PC-9 (cell line): ENCODE measurements at regions of chr16 and their contacts with region 1.

Region 1: DNA sequence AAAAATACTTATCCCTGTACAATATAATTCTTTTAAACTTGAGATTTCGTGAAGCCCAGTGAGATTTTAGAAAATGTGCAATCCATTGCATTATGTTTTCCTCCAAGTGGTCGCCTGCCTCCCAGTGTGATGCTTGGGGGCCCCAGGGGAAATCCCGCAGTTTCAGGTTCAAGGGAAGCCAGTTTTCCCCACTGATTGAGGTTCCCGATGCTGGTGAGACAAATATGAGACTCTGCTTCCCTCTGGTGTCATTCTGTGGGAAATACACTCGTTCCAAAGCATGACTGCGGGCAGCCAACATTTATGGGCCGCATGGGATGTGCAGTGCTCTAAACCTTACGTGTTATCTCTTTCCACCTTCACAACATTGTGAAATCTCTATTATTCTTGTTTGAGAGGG is 200.8 kb downstream of the PRKCB start:
- DNase-seq: peak in 1 of 2 experiments; percentile 30
- H3K4me3 ChIP-seq: no peak overlapping the region
- H3K27ac ChIP-seq: no peak overlapping the region
- H3K4me1 ChIP-seq: no peaks in the 10 kb centered on the region
- H3K27me3 ChIP-seq: peaks cover 34% of the 10 kb centered on the region; the same call in 1 of the 2 replicates
- CTCF ChIP-seq: peak; percentile 74

Region 2: DNA sequence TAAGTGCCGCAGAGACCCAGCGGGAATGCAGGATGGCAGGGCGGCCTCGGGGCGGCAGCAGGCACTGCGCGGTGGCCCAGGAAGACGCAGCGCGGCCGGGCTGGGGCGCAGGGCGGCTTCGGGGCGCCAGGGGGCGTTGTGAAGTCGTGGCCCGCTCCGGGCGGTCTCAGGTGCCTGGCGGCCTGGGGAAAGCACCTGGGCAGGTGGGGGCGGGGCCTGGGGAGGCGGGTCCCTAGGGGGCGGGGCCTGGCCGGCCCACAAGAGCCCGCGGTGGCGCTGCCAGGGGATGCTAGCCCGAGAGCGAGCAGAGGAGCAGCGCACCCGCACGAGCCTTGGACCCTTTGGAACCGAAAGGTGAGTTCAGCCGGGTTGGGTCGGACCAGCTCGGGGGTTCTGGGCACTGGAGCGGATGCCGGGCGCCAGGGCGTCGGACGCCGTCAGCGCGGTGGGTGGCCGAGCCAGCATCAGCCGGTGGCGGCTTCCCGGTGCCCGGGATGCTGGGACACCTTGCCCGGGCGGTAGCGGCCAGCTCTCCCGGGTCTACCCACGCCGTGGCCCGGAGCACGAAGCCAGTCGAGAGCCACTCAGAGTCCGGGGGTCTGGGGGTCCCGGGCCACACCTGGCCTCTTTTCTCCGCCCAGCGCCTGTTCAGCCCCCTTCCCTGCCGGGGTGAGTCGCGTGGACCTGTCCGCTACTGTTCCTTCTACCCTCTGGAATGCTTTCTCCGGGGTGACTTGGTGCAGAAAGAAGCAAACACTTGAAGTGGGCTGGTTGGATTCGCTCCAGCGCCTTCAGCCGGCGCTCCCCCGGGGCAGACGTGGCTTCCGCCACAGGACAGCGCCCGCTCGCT is 853.9 kb before region 1 on chr16 and contains the start of gene SCNN1G:
- CTCF ChIA-PET with region 1: no interaction called
- POLR2A ChIA-PET with region 1: no interaction called
- intact Hi-C with region 1: loop called (anchors 5 kb)
- DNase-seq: peak; percentile 75 to 99
- H3K4me3 ChIP-seq: peak within 1 kb of the TSS; percentile 81
- H3K27ac ChIP-seq: no peak within 1 kb of the TSS
- H3K4me1 ChIP-seq: peaks cover 27% of the 10 kb centered on the region
- H3K27me3 ChIP-seq: no peaks in the 10 kb centered on the region
- CTCF ChIP-seq: peak; percentile 85
- total RNA-seq, gene SCNN1G: not detected in 2 replicates

Region 3: DNA sequence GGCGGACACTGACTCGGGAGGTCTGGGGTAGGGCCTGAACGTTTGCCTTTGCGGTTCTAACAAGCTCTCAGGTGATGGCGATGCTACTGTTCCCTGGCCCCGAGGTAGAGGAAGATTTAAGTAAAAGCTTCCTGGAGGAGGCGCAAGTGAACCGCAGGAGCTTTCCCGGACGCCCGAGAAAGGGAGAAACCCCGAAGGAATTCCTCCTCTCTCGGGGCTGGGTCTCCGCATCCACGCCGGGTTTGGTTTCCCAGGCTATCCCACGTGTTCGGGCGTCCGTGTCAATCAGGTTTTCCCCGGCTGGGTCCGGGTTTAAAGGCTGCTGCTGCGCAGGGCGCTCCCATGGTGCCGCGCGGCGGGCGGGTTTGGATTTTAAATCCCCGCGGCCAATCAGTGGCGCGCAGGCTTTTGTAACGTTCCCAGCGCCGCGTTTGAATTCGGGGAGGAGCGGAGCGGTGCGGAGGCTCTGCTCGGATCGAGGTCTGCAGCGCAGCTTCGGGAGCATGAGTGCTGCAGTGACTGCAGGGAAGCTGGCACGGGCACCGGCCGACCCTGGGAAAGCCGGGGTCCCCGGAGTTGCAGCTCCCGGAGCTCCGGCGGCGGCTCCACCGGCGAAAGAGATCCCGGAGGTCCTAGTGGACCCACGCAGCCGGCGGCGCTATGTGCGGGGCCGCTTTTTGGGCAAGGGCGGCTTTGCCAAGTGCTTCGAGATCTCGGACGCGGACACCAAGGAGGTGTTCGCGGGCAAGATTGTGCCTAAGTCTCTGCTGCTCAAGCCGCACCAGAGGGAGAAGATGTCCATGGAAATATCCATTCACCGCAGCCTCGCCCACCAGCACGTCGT is 358.0 kb before region 1 on chr16 and contains the start of gene PLK1:
- CTCF ChIA-PET with region 1: no interaction called
- POLR2A ChIA-PET with region 1: no interaction called
- intact Hi-C with region 1: loop called (anchors 5 kb)
- DNase-seq: peak; percentile 71 to 90
- H3K4me3 ChIP-seq: peak within 1 kb of the TSS; percentile 94
- H3K27ac ChIP-seq: no peak within 1 kb of the TSS; the same call in 1 of the 2 replicates
- H3K4me1 ChIP-seq: peaks cover 27% of the 10 kb centered on the region
- H3K27me3 ChIP-seq: no peaks in the 10 kb centered on the region
- CTCF ChIP-seq: peak; percentile 60
- total RNA-seq, gene PLK1: 169 and 213 TPM in 2 replicates

Region 4: DNA sequence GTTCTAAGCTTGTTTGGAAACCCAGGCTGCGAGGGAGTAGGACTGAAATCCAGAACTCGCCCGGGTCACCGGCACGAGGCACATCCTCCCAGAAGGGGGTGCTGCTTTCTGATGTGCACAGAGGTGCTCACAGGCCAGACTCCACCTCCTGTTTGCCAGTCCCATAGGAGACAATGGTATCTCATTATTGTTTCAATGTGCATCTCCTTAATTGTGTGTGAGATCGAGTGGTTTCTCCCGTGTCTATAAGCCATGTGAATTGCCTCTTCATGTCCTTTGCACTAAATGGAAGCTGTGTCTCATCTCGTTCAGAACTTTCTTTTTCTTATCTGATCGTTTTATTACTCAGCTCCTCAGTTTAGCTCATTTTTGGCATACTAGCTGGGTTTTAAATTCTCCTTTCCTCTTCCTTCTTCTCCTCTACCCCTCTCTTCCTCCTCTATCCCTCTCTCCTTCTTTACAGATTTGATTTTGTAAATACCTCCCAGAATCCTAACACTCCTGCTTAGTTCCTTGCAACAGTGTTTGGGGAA is 233.0 kb before region 1 on chr16:
- CTCF ChIA-PET with region 1: interaction called, 3 read pairs
- POLR2A ChIA-PET with region 1: no interaction called
- intact Hi-C with region 1: loop called (anchors 1 kb)
- DNase-seq: peak in 1 of 2 experiments; percentile 30
- H3K4me3 ChIP-seq: no peak overlapping the region
- H3K27ac ChIP-seq: no peak overlapping the region
- H3K4me1 ChIP-seq: 0 out of 2 replicates have a peak, but pooled peaks cover 4% of the 10 kb centered on the region
- H3K27me3 ChIP-seq: peaks cover 56% of the 10 kb centered on the region
- CTCF ChIP-seq: peak; percentile 41; the same call in 1 of the 2 replicates